ENCODE measurements at regions of chr2 and their contacts with region 1.

Region 1: GRCh38 chr2:227766373-227766883 is 20.7 kb downstream of the SCYGR8 start:
- DNase-seq: peak; percentile 68
- ATAC-seq: peak; percentile 98
- H3K4me3 ChIP-seq: no peak overlapping the region
- H3K27ac ChIP-seq: no peak overlapping the region
- H3K4me1 ChIP-seq: no peaks in the 10 kb centered on the region
- H3K27me3 ChIP-seq: no peaks in the 10 kb centered on the region
- CTCF ChIP-seq: peak; percentile 84
- POLR2A ChIP-seq: no peak
- RAD21 ChIP-seq: peak; percentile 86

Region 2: GRCh38 chr2:227132986-227133385 is 633.4 kb before region 1 on chr2:
- CTCF ChIA-PET with region 1: interaction called, 4 read pairs
- POLR2A ChIA-PET with region 1: interaction called, 4 read pairs
- dilution Hi-C with region 1: no loop called
- in situ Hi-C with region 1: loop called (anchors 10 kb)
- intact Hi-C with region 1: loop called (anchors 1 kb)
- DNase-seq: no peak
- ATAC-seq: no peak
- H3K4me3 ChIP-seq: no peak overlapping the region
- H3K27ac ChIP-seq: no peak overlapping the region
- H3K4me1 ChIP-seq: no peaks in the 10 kb centered on the region
- H3K27me3 ChIP-seq: peaks cover 38% of the 10 kb centered on the region
- CTCF ChIP-seq: no peak
- POLR2A ChIP-seq: no peak
- RAD21 ChIP-seq: no peak

Region 3: DNA sequence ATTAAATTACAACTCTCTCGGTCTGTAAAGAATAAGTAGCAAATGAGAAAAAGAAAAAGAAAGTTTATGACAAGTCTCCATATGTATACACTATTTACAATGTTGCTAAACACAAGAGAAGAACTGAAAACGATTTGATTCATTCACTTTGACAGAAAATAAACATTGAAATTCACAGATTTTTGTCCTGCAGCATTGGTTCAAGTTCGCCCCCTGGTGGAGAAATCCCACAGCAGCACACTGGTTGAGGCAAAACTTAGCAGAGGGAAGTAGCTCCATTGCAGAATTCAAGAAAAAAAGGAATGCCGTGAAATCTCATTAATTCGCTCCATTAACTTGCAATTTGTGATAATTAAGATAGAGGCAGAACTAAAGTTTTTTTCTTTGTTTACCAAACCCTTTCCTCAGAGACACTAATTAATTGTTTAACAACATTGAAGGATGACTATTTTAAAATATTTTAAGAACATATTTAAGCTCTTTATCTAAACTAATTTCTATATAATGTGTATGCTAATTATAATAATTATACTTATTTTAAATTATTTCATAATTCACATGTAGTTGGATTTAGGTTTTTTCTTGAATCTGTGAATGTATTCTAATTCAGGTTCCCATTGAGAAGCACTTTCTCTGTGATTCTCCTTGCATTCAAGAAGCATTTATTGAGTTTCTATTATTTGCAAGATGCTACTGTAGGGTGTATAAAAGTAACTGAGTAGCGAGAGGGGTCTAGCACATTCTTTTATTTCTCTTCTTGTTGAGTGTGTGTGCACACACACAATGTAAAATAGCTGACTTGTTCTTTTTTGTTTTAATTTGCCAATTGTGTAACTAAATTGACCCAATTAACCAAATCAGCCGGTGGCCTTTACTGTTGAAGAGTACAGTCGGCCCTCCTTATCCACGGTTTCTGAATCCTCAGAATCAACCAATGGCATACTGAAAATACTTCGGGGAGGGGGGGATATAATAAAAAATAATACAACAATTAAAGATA is 527.9 kb before region 1 on chr2:
- CTCF ChIA-PET with region 1: interaction called, 9 read pairs
- POLR2A ChIA-PET with region 1: no interaction called
- dilution Hi-C with region 1: no loop called
- in situ Hi-C with region 1: no loop called
- intact Hi-C with region 1: loop called (anchors 1 kb)
- DNase-seq: peak; percentile 61
- ATAC-seq: peak; percentile 79
- H3K4me3 ChIP-seq: no peak overlapping the region
- H3K27ac ChIP-seq: no peak overlapping the region
- H3K4me1 ChIP-seq: no peaks in the 10 kb centered on the region
- H3K27me3 ChIP-seq: peaks cover 8% of the 10 kb centered on the region
- CTCF ChIP-seq: peak; percentile 92
- POLR2A ChIP-seq: no peak
- RAD21 ChIP-seq: peak; percentile 64

Region 4: GRCh38 chr2:227479865-227480475 is 286.5 kb before region 1 on chr2:
- CTCF ChIA-PET with region 1: interaction called, 8 read pairs
- POLR2A ChIA-PET with region 1: no interaction called
- dilution Hi-C with region 1: no loop called
- in situ Hi-C with region 1: loop called (anchors 10 kb)
- intact Hi-C with region 1: loop called (anchors 2 kb)
- DNase-seq: peak; percentile 58
- ATAC-seq: peak; percentile 86
- H3K4me3 ChIP-seq: no peak overlapping the region
- H3K27ac ChIP-seq: no peak overlapping the region; the same call in 1 of the 2 replicates
- H3K4me1 ChIP-seq: peaks cover 5% of the 10 kb centered on the region
- H3K27me3 ChIP-seq: no peaks in the 10 kb centered on the region
- CTCF ChIP-seq: peak; percentile 56
- POLR2A ChIP-seq: no peak
- RAD21 ChIP-seq: peak; percentile 63

Region 5: GRCh38 chr2:227570615-227571014 is 195.8 kb before region 1 on chr2:
- CTCF ChIA-PET with region 1: no interaction called
- POLR2A ChIA-PET with region 1: no interaction called
- dilution Hi-C with region 1: no loop called
- in situ Hi-C with region 1: no loop called
- intact Hi-C with region 1: loop called (anchors 5 kb)
- DNase-seq: peak; percentile 3
- ATAC-seq: peak; percentile 24; the same call in 1 of the 2 replicates
- H3K4me3 ChIP-seq: no peak overlapping the region
- H3K27ac ChIP-seq: no peak overlapping the region
- H3K4me1 ChIP-seq: peaks cover 3% of the 10 kb centered on the region; the same call in 1 of the 2 replicates
- H3K27me3 ChIP-seq: no peaks in the 10 kb centered on the region
- CTCF ChIP-seq: no peak
- POLR2A ChIP-seq: no peak
- RAD21 ChIP-seq: no peak

Region 6: DNA sequence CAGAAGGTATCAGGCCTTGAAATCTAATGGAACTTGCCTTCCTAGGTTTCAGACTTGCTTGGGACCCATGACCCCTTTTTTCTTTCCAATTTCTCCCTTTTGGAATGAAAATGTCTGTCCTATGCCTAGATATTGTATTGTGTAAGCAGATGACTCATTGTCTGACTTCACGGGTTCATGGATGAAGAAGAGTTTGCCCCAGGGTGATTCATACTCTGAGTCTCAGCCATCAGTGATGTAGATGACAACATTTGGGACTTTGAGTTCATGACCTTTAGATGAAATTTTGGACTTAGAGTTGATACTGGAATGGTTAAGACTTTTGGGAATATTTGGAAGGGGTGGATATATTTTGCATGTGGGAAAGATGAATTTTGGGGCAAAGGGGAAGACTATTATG is 111.0 kb before region 1 on chr2:
- CTCF ChIA-PET with region 1: interaction called, 18 read pairs
- POLR2A ChIA-PET with region 1: no interaction called
- dilution Hi-C with region 1: no loop called
- in situ Hi-C with region 1: no loop called
- intact Hi-C with region 1: loop called (anchors 1 kb)
- DNase-seq: peak; percentile 91
- ATAC-seq: peak; percentile 81
- H3K4me3 ChIP-seq: no peak overlapping the region
- H3K27ac ChIP-seq: no peak overlapping the region
- H3K4me1 ChIP-seq: no peaks in the 10 kb centered on the region
- H3K27me3 ChIP-seq: no peaks in the 10 kb centered on the region
- CTCF ChIP-seq: no peak
- POLR2A ChIP-seq: no peak
- RAD21 ChIP-seq: no peak

Region 7: GRCh38 chr2:227884511-227884947 is 118.1 kb after region 1 on chr2:
- CTCF ChIA-PET with region 1: no interaction called
- POLR2A ChIA-PET with region 1: interaction called, 4 read pairs
- dilution Hi-C with region 1: no loop called
- in situ Hi-C with region 1: no loop called
- intact Hi-C with region 1: loop called (anchors 5 kb)
- DNase-seq: peak; percentile 72
- ATAC-seq: peak; percentile 99
- H3K4me3 ChIP-seq: no peak overlapping the region
- H3K27ac ChIP-seq: no peak overlapping the region
- H3K4me1 ChIP-seq: 0 out of 2 replicates have a peak, but pooled peaks cover 1% of the 10 kb centered on the region
- H3K27me3 ChIP-seq: no peaks in the 10 kb centered on the region
- CTCF ChIP-seq: peak; percentile 76
- POLR2A ChIP-seq: no peak
- RAD21 ChIP-seq: peak; percentile 65